CD8-positive, alpha-beta T cell (primary cell): ENCODE measurements at regions of chr14 and their contacts with region 1.

Region 1: GRCh38 chr14:96796851-96797581 is at the start of gene VRK1:
- DNase-seq: peak; percentile 90 to 97 (median 94)
- ATAC-seq: peak; percentile 97
- H3K4me3 ChIP-seq: peak within 1 kb of the TSS; percentile 68 to 73
- H3K4me3 Mint-ChIP-seq: peak within 1 kb of the TSS; percentile 87
- H3K27ac ChIP-seq: peak within 1 kb of the TSS; percentile 54 to 66
- H3K27ac Mint-ChIP-seq: peak within 1 kb of the TSS; percentile 93
- H3K4me1 ChIP-seq: peaks cover 19% of the 10 kb centered on the region
- H3K4me1 Mint-ChIP-seq: peaks cover 24% of the 10 kb centered on the region
- H3K27me3 ChIP-seq: no peaks in the 10 kb centered on the region
- H3K27me3 Mint-ChIP-seq: no peaks in the 10 kb centered on the region
- CTCF ChIP-seq: no peak
- total RNA-seq, gene VRK1: 47.2 to 50.4 TPM

Region 2: DNA sequence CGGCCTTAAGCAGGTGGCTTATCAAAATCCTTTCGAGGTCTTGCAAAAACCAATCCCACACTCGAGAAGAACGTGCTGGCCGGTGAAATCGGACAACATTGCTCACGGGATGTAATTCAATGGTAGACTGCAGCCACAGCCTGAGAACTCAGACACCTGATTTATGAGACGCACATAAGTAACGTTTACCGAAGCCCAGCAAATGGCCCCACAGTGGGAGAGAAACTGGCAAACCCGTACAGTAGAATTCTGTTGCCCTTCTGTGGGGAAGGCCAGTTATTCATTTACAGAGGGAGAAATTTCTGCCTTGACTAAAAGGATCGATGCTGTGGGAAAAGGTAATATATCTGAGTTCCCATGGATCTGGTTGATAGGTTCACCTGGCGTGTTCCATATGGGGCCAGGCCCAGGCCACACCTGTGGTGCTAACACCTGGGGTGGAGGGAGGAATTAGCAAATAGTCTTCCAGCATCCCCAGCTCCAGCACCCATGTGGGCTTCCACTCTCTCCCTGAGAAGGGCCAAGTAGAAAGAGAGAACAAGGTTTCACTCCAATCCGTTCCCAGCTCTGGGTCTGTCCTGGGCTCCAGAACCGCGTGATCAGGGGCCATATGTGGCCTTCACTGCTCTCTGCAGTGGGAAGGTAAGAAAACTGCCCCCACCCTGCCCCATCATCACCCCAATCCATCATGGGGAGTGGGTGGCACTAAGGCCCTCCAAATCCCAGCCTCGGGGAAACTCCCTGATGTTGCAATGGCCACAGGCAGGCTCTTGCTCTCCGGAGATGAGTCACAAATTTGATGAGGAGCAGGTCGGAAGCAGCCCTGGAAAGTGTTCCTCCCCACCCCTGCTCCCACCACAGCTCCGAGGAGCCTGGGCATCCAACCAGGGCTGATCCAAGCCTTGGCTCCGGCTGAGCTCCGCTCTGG is 528.3 kb before region 1 on chr14:
- CTCF ChIA-PET with region 1: no interaction called
- POLR2A ChIA-PET with region 1: no interaction called
- intact Hi-C with region 1: no loop called
- DNase-seq: no peak
- ATAC-seq: no peak
- H3K4me3 ChIP-seq: no peak overlapping the region
- H3K4me3 Mint-ChIP-seq: no peak overlapping the region
- H3K27ac ChIP-seq: no peak overlapping the region
- H3K27ac Mint-ChIP-seq: no peak overlapping the region
- H3K4me1 ChIP-seq: no peaks in the 10 kb centered on the region
- H3K4me1 Mint-ChIP-seq: no peaks in the 10 kb centered on the region
- H3K27me3 ChIP-seq: no peaks in the 10 kb centered on the region
- H3K27me3 Mint-ChIP-seq: peaks cover 4% of the 10 kb centered on the region
- CTCF ChIP-seq: no peak

Region 3: GRCh38 chr14:96391293-96392118 is 405.5 kb before region 1 on chr14:
- CTCF ChIA-PET with region 1: no interaction called
- POLR2A ChIA-PET with region 1: no interaction called
- intact Hi-C with region 1: loop called in 1 of 2 experiments (anchors 10 kb)
- DNase-seq: peak; percentile 97 to 100 (median 100)
- ATAC-seq: peak; percentile 94
- H3K4me3 ChIP-seq: peak overlapping the region; percentile 92
- H3K4me3 Mint-ChIP-seq: peak overlapping the region; percentile 90
- H3K27ac ChIP-seq: peak overlapping the region; percentile 57 to 64
- H3K27ac Mint-ChIP-seq: peak overlapping the region; percentile 49
- H3K4me1 ChIP-seq: peaks cover 12% of the 10 kb centered on the region
- H3K4me1 Mint-ChIP-seq: peaks cover 12% of the 10 kb centered on the region
- H3K27me3 ChIP-seq: no peaks in the 10 kb centered on the region
- H3K27me3 Mint-ChIP-seq: no peaks in the 10 kb centered on the region
- CTCF ChIP-seq: no peak

Region 4: GRCh38 chr14:96762650-96763049 is 34.4 kb before region 1 on chr14:
- CTCF ChIA-PET with region 1: no interaction called
- POLR2A ChIA-PET with region 1: no interaction called
- intact Hi-C with region 1: loop called (anchors 1 kb)
- DNase-seq: peak in 3 of 9 experiments; percentile 16 to 80 (median 74)
- ATAC-seq: peak; percentile 98
- H3K4me3 ChIP-seq: no peak overlapping the region
- H3K4me3 Mint-ChIP-seq: peak overlapping the region; percentile 68
- H3K27ac ChIP-seq: no peak overlapping the region
- H3K27ac Mint-ChIP-seq: no peak overlapping the region
- H3K4me1 ChIP-seq: no peaks in the 10 kb centered on the region
- H3K4me1 Mint-ChIP-seq: peaks cover 4% of the 10 kb centered on the region
- H3K27me3 ChIP-seq: no peaks in the 10 kb centered on the region
- H3K27me3 Mint-ChIP-seq: peaks cover 2% of the 10 kb centered on the region
- CTCF ChIP-seq: no peak

Region 5: DNA sequence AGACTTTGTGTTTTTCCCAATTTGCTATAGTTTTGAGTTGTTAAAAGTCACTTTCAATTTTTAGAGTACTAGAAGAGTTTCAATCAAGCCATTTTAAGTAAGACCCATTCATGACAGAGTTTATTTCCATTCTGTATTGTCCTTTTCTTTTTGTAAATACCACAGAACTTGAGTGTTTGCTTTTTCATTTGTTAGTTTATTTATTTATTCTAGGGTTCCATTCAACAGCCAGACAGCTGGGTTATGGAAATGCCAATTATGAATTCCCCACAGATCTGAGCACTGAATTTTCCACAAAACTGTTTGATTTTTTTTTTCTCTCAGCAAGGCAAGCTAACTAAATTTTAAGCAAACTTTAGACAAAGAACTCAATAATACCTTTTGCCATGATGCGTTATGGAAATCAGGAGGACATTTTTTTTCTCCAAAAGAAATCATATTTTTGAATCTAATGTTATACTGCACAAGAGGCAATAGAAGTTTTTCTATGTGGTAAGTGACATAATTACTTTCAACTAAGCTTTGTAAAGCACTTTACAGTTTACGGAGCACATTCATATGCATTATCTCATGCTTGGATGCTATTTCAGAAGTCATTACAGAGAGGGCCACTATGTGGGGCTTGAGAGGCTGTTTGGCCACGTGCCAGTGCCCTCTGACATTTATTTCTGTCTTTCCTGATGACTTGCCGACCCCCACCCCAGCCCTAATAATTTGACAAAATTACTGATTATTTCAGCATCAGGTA is 181.7 kb after region 1 on chr14:
- CTCF ChIA-PET with region 1: no interaction called
- POLR2A ChIA-PET with region 1: no interaction called
- intact Hi-C with region 1: no loop called
- DNase-seq: no peak
- ATAC-seq: no peak
- H3K4me3 ChIP-seq: no peak overlapping the region
- H3K4me3 Mint-ChIP-seq: no peak overlapping the region
- H3K27ac ChIP-seq: no peak overlapping the region
- H3K27ac Mint-ChIP-seq: no peak overlapping the region
- H3K4me1 ChIP-seq: no peaks in the 10 kb centered on the region
- H3K4me1 Mint-ChIP-seq: no peaks in the 10 kb centered on the region
- H3K27me3 ChIP-seq: no peaks in the 10 kb centered on the region
- H3K27me3 Mint-ChIP-seq: peaks cover 15% of the 10 kb centered on the region
- CTCF ChIP-seq: no peak

Region 6: GRCh38 chr14:97458661-97459579 is 661.9 kb after region 1 on chr14:
- CTCF ChIA-PET with region 1: no interaction called
- POLR2A ChIA-PET with region 1: no interaction called
- intact Hi-C with region 1: loop called in 1 of 2 experiments (anchors 10 kb)
- DNase-seq: peak; percentile 60 to 92 (median 84)
- ATAC-seq: peak; percentile 81
- H3K4me3 ChIP-seq: peak overlapping the region; percentile 53 to 62
- H3K4me3 Mint-ChIP-seq: peak overlapping the region; percentile 88
- H3K27ac ChIP-seq: peak overlapping the region; percentile 82 to 88
- H3K27ac Mint-ChIP-seq: peak overlapping the region; percentile 97
- H3K4me1 ChIP-seq: peaks cover 34% of the 10 kb centered on the region
- H3K4me1 Mint-ChIP-seq: peaks cover 75% of the 10 kb centered on the region
- H3K27me3 ChIP-seq: no peaks in the 10 kb centered on the region
- H3K27me3 Mint-ChIP-seq: no peaks in the 10 kb centered on the region
- CTCF ChIP-seq: no peak

Region 7: GRCh38 chr14:98350213-98350612 is 1553.2 kb after region 1 on chr14:
- CTCF ChIA-PET with region 1: no interaction called
- POLR2A ChIA-PET with region 1: no interaction called
- intact Hi-C with region 1: no loop called
- DNase-seq: no peak
- ATAC-seq: no peak
- H3K4me3 ChIP-seq: no peak overlapping the region
- H3K4me3 Mint-ChIP-seq: no peak overlapping the region
- H3K27ac ChIP-seq: no peak overlapping the region
- H3K27ac Mint-ChIP-seq: no peak overlapping the region
- H3K4me1 ChIP-seq: peaks cover 5% of the 10 kb centered on the region
- H3K4me1 Mint-ChIP-seq: peaks cover 22% of the 10 kb centered on the region
- H3K27me3 ChIP-seq: no peaks in the 10 kb centered on the region
- H3K27me3 Mint-ChIP-seq: no peaks in the 10 kb centered on the region
- CTCF ChIP-seq: no peak